ENCODE measurements at regions of chr7 and their contacts with region 1.

Region 1: DNA sequence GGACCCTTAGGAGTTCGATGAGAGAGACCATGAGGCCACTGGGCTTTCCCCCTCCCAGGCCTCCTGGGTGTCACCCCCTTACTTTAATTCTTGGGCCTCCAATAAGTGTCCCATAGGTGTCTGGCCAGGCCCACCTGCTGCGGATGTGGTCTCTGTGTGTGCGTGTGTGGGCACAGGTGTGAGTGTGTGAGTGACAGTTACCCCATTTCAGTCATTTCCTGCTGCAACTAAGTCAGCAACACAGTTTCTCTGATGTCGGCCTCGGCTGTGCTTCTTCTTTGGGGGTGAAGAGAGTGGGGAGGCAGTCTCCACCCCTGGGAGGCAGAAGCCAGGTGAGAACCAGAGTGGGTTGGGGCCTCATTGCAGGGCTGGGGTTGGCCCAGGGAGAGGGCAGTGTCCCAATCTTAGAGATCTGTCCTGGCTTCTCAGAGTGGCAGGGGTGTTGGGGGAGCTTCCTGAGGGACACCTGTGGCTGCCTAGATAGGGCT is 1.5 kb downstream of the PVRIG start:
- DNase-seq: peak; percentile 82
- ATAC-seq: peak; percentile 52
- H3K4me3 Mint-ChIP-seq: peak overlapping the region; percentile 94
- H3K27ac Mint-ChIP-seq: peak overlapping the region; percentile 99
- H3K4me1 Mint-ChIP-seq: peaks cover 49% of the 10 kb centered on the region
- H3K27me3 Mint-ChIP-seq: no peaks in the 10 kb centered on the region

Region 2: GRCh38 chr7:100132697-100133151 is 88.6 kb before region 1 on chr7:
- POLR2A ChIA-PET with region 1: interaction called, 14 read pairs
- DNase-seq: peak; percentile 68
- ATAC-seq: peak; percentile 74
- H3K4me3 Mint-ChIP-seq: no peak overlapping the region
- H3K27ac Mint-ChIP-seq: no peak overlapping the region
- H3K4me1 Mint-ChIP-seq: peaks cover 18% of the 10 kb centered on the region
- H3K27me3 Mint-ChIP-seq: no peaks in the 10 kb centered on the region

Region 3: GRCh38 chr7:100177045-100178001 is 44.0 kb before region 1 on chr7 and contains the starts of genes GPC2 and STAG3:
- POLR2A ChIA-PET with region 1: interaction called, 11 read pairs
- DNase-seq: peak; percentile 99
- ATAC-seq: peak; percentile 86
- H3K4me3 Mint-ChIP-seq: peak within 1 kb of the TSS; percentile 80
- H3K27ac Mint-ChIP-seq: peak within 1 kb of the TSS; percentile 64
- H3K4me1 Mint-ChIP-seq: peaks cover 48% of the 10 kb centered on the region
- H3K27me3 Mint-ChIP-seq: peaks cover 3% of the 10 kb centered on the region
- total RNA-seq, gene GPC2: 12.6 to 13.0 TPM
- total RNA-seq, gene STAG3: 31.1 to 38.8 TPM

Region 4: GRCh38 chr7:100208911-100209408 is 12.3 kb before region 1 on chr7:
- POLR2A ChIA-PET with region 1: interaction called, 45 read pairs
- DNase-seq: peak; percentile 61
- ATAC-seq: peak; percentile 85
- H3K4me3 Mint-ChIP-seq: peak overlapping the region; percentile 84
- H3K27ac Mint-ChIP-seq: peak overlapping the region; percentile 87
- H3K4me1 Mint-ChIP-seq: peaks cover 44% of the 10 kb centered on the region
- H3K27me3 Mint-ChIP-seq: no peaks in the 10 kb centered on the region

Region 5: DNA sequence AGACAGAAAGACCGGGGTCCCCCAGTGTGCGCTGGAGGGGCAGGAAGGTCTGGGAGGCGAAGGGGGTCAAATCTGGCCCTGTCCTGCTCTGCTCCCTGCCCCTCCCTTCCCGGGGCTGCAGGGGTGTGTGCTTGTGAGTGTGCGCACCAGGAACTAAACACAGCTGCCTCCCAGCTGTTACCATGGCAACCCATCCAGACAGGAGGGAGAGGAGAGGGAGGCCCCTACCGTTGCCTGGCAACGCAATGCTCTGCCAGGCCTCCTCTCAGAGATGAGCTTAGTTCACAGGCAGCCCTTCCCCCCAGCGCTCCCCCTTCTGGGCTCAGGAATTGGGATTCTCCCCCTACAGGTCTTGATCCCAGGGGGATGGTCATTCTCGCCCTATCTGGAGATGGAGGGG is 268.5 kb after region 1 on chr7:
- POLR2A ChIA-PET with region 1: no interaction called
- DNase-seq: no peak
- ATAC-seq: no peak
- H3K4me3 Mint-ChIP-seq: no peak overlapping the region
- H3K27ac Mint-ChIP-seq: no peak overlapping the region
- H3K4me1 Mint-ChIP-seq: peaks cover 11% of the 10 kb centered on the region
- H3K27me3 Mint-ChIP-seq: peaks cover 10% of the 10 kb centered on the region

Measured in activated naive CD8-positive, alpha-beta T cell treated with anti-CD3 and anti-CD28 coated beads, Interleukin-2, amount 10 ng/mL, durations not matched to agents 7 days and 5 days (primary cell).